ENCODE measurements at regions of chr5 and their contacts with region 1.

Region 1: DNA sequence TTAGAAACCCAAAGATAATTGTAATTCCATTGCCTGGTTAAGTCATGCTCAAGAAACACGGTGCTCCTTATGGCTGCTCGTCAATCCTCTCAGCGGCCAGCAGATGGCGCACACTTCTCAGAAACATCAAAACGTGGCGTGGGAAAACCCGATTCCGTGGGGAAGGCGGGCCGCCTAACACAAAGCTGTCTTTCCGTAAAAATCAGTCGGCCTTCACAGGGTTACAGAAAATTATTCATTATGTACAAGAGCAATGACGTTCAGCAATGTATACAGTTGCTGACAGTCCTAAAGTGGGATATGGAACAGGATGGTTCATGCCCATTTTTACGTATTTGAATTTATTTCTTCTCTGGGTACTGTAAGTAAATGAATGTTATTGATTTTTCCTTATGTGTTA is 83.5 kb downstream of the PDE4D start:
- DNase-seq: peak; percentile 80
- ATAC-seq: peak; percentile 63
- H3K4me3 Mint-ChIP-seq: no peak overlapping the region
- H3K27ac Mint-ChIP-seq: no peak overlapping the region
- H3K4me1 Mint-ChIP-seq: peaks cover 4% of the 10 kb centered on the region
- H3K27me3 Mint-ChIP-seq: peaks cover 10% of the 10 kb centered on the region

Region 2: GRCh38 chr5:59568161-59568560 is 241.9 kb before region 1 on chr5:
- CTCF ChIA-PET with region 1: no interaction called
- POLR2A ChIA-PET with region 1: no interaction called
- intact Hi-C with region 1: no loop called
- DNase-seq: no peak
- ATAC-seq: no peak
- H3K4me3 Mint-ChIP-seq: no peak overlapping the region
- H3K27ac Mint-ChIP-seq: no peak overlapping the region
- H3K4me1 Mint-ChIP-seq: no peaks in the 10 kb centered on the region
- H3K27me3 Mint-ChIP-seq: peaks cover 3% of the 10 kb centered on the region

Region 3: DNA sequence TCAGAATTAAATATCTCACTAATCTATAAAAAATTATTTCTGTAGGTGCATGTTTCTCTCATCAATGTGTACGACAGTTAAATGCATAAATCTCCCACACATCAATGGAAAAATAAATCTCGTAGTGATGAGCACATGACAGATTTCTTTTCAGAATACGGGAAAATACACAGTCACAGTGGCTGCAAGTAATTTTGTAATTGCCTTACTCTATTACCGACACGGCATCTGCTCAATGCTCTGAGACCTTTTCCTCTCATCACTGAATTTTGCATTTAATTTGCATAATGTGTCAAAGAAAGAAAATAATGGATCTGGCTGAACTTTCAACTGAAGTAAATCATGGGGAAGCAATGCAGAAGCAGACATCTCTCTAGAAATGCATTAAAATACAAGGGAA is 46.3 kb after region 1 on chr5:
- CTCF ChIA-PET with region 1: no interaction called
- POLR2A ChIA-PET with region 1: no interaction called
- intact Hi-C with region 1: no loop called
- DNase-seq: no peak
- ATAC-seq: no peak
- H3K4me3 Mint-ChIP-seq: no peak overlapping the region
- H3K27ac Mint-ChIP-seq: no peak overlapping the region
- H3K4me1 Mint-ChIP-seq: no peaks in the 10 kb centered on the region
- H3K27me3 Mint-ChIP-seq: peaks cover 3% of the 10 kb centered on the region

Region 4: DNA sequence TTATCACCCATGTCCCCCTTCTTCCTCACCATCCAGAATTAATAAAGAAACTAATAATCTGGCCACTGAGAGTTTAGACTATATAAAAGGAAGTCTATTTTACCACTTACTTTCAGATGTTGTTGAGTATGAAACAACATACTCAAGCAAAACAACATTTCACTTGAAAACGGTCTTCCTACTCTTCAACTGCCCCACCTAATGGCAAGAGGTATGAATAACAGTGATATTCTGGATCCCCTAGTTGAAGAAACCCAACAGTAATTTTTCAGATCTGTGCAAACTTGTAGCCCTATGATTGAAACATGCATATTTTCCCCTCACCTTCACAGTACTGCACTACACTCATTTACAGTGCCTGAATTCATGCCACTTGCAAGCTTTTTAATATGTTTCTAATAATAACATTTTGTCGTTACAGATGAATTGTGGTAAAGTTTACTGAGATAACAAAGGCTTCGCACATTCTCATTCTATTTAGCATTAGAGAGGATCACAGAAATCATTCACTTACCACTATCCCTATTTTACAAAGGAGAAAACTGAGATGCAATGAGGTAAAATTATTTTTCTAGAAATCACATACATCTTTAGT is 351.4 kb after region 1 on chr5:
- CTCF ChIA-PET with region 1: interaction called, 3 read pairs
- POLR2A ChIA-PET with region 1: no interaction called
- intact Hi-C with region 1: loop called in 1 of 2 experiments (anchors 1 kb)
- DNase-seq: no peak
- ATAC-seq: no peak
- H3K4me3 Mint-ChIP-seq: no peak overlapping the region
- H3K27ac Mint-ChIP-seq: no peak overlapping the region
- H3K4me1 Mint-ChIP-seq: no peaks in the 10 kb centered on the region
- H3K27me3 Mint-ChIP-seq: no peaks in the 10 kb centered on the region

Region 5: DNA sequence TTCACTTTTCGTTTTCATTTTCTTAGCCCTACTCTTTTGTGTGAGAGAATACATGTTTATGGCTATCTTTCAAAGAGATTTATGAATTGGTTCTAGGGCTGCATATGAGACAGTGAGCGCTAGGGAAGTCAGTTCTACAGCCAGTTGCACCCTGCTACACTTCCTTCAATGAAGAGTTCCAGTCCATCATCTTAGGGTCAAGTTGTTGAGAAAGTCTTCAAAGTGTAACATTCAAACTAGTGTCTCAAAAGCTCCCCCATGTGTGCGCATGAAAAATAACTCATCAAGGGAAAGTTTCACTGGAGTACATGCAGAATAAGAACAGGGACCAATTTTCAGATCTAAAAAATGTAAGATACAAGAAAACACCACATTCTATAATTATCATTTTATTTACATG is 572.7 kb after region 1 on chr5:
- CTCF ChIA-PET with region 1: interaction called, 3 read pairs
- POLR2A ChIA-PET with region 1: no interaction called
- intact Hi-C with region 1: loop called (anchors 2 to 5 kb)
- DNase-seq: no peak
- ATAC-seq: no peak
- H3K4me3 Mint-ChIP-seq: no peak overlapping the region
- H3K27ac Mint-ChIP-seq: no peak overlapping the region
- H3K4me1 Mint-ChIP-seq: no peaks in the 10 kb centered on the region
- H3K27me3 Mint-ChIP-seq: peaks cover 1% of the 10 kb centered on the region

Region 6: GRCh38 chr5:60649283-60649917 is 839.4 kb after region 1 on chr5:
- CTCF ChIA-PET with region 1: interaction called, 4 read pairs
- POLR2A ChIA-PET with region 1: no interaction called
- intact Hi-C with region 1: loop called in 1 of 2 experiments (anchors 5 kb)
- DNase-seq: no peak
- ATAC-seq: no peak
- H3K4me3 Mint-ChIP-seq: no peak overlapping the region
- H3K27ac Mint-ChIP-seq: no peak overlapping the region
- H3K4me1 Mint-ChIP-seq: no peaks in the 10 kb centered on the region
- H3K27me3 Mint-ChIP-seq: no peaks in the 10 kb centered on the region